B cell (primary cell): ENCODE measurements at regions of chr14 and their contacts with region 1.

Region 1: GRCh38 chr14:73491256-73492042 is 716 bp downstream of the RIOX1 start:
- DNase-seq: peak; percentile 79
- ATAC-seq: peak; percentile 50
- H3K4me3 ChIP-seq: peak overlapping the region; percentile 56 to 86 (median 83)
- H3K4me3 Mint-ChIP-seq: peak overlapping the region; percentile 94
- H3K27ac ChIP-seq: peak overlapping the region; percentile 55 to 64
- H3K27ac Mint-ChIP-seq: peak overlapping the region; percentile 92
- H3K4me1 ChIP-seq: peaks cover 21 to 32% of the 10 kb centered on the region in 2 donors
- H3K4me1 Mint-ChIP-seq: peaks cover 35% of the 10 kb centered on the region
- H3K27me3 ChIP-seq: no peaks in the 10 kb centered on the region
- H3K27me3 Mint-ChIP-seq: no peaks in the 10 kb centered on the region
- CTCF ChIP-seq: no peak

Region 2: GRCh38 chr14:73142216-73142615 is 349.2 kb before region 1 on chr14:
- CTCF ChIA-PET with region 1: no interaction called
- POLR2A ChIA-PET with region 1: no interaction called
- intact Hi-C with region 1: no loop called
- DNase-seq: no peak
- ATAC-seq: no peak
- H3K4me3 ChIP-seq: no peak overlapping the region
- H3K4me3 Mint-ChIP-seq: no peak overlapping the region
- H3K27ac ChIP-seq: peak overlapping the region in 1 of 2 donors; percentile 20
- H3K27ac Mint-ChIP-seq: no peak overlapping the region
- H3K4me1 ChIP-seq: peaks cover 6 to 10% of the 10 kb centered on the region in 2 donors
- H3K4me1 Mint-ChIP-seq: peaks cover 36% of the 10 kb centered on the region
- H3K27me3 ChIP-seq: no peaks in the 10 kb centered on the region
- H3K27me3 Mint-ChIP-seq: no peaks in the 10 kb centered on the region
- CTCF ChIP-seq: no peak

Region 3: DNA sequence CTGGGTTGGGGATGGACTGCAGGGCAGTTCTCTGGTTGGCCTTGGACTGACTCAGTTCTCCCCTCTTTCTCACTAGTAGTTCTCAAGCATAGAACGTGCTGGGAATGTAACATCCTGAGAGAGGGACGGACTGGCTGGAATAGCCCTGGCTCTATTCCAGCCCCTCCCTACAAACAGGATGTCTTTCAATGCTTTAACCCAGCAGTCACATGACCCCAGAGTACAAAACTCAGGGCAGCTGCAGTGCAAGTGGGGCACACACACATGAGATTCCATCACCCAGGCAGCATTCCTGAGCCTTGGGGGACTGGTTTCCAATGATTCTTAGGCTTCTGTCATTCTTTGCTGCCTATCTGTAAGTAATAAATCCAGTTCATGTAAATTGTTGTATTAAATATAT is 119.2 kb after region 1 on chr14:
- CTCF ChIA-PET with region 1: no interaction called
- POLR2A ChIA-PET with region 1: no interaction called
- intact Hi-C with region 1: no loop called
- DNase-seq: no peak
- ATAC-seq: no peak
- H3K4me3 ChIP-seq: no peak overlapping the region
- H3K4me3 Mint-ChIP-seq: no peak overlapping the region
- H3K27ac ChIP-seq: no peak overlapping the region
- H3K27ac Mint-ChIP-seq: no peak overlapping the region
- H3K4me1 ChIP-seq: peaks cover 4% of the 10 kb centered on the region in 2 donors
- H3K4me1 Mint-ChIP-seq: peaks cover 6% of the 10 kb centered on the region
- H3K27me3 ChIP-seq: peaks cover 0 to 8% (median 0%) of the 10 kb centered on the region in 4 experiments
- H3K27me3 Mint-ChIP-seq: peaks cover 9% of the 10 kb centered on the region
- CTCF ChIP-seq: no peak

Region 4: DNA sequence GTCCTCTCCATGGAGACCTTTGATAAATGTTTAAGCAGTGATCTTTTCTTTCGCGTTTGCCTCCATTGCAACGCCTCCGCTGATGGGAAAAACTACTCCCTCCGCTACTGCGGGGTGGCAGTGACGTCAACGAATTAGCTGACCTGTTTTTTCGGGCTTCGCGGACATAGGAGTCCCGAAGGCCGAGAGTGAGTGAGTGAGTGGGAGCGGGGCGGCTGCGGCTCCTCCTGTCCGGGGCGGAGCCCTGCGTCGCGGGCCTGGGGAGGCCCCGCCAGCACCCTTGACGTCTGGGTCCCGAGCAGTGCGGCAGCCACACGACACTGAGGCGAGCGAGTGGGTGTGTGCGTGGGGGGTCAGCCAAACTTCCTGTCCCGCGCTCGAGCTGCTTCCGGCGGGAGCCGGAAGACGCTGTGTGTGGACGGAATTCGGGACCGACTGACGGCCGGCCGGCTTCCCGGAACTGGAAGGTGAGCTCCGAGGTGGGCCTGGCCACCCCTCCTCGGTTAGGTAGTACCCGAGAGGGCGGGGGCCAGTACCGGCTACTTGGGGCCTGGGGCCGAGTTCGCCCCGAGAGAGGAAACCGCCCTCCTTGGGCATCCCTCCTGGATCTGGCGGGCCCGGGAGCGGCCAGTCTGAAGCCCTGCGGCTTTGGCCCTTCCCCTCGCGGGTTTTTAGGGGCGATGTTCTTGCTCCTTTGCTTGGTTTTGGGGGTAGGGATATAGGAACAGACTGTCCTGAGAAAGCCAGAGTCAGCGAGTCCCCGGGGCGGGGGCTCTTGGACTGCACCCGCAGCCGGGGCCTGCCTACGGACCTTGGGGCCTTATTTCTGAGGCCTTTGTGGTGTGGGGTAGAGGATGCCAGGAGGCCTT is 395.2 kb after region 1 on chr14 and contains the start of gene ZNF410:
- CTCF ChIA-PET with region 1: no interaction called
- POLR2A ChIA-PET with region 1: interaction called, 4 read pairs
- intact Hi-C with region 1: loop called (anchors 5 kb)
- DNase-seq: peak; percentile 93
- ATAC-seq: peak; percentile 99
- H3K4me3 ChIP-seq: peak within 1 kb of the TSS; percentile 64 to 97 (median 94)
- H3K4me3 Mint-ChIP-seq: peak within 1 kb of the TSS; percentile 99
- H3K27ac ChIP-seq: peak within 1 kb of the TSS; percentile 94 to 96
- H3K27ac Mint-ChIP-seq: peak within 1 kb of the TSS; percentile 98
- H3K4me1 ChIP-seq: peaks cover 18 to 20% of the 10 kb centered on the region in 2 donors
- H3K4me1 Mint-ChIP-seq: peaks cover 41% of the 10 kb centered on the region
- H3K27me3 ChIP-seq: no peaks in the 10 kb centered on the region
- H3K27me3 Mint-ChIP-seq: no peaks in the 10 kb centered on the region
- CTCF ChIP-seq: no peak
- total RNA-seq, gene ZNF410: 58.3 and 69.0 TPM in 2 replicates